ENCODE measurements at regions of chr9 and their contacts with region 1.

Region 1: GRCh38 chr9:22307013-22307711 is 139.5 kb upstream of the DMRTA1 start:
- H3K4me3 ChIP-seq: no peak overlapping the region
- H3K27ac ChIP-seq: no peak overlapping the region
- H3K4me1 ChIP-seq: no peaks in the 10 kb centered on the region
- CTCF ChIP-seq: peak; percentile 42; the same call in 1 of the 2 replicates

Region 2: GRCh38 chr9:22036866-22037626 is 270.1 kb before region 1 on chr9:
- CTCF ChIA-PET with region 1: no interaction called
- POLR2A ChIA-PET with region 1: no interaction called
- H3K4me3 ChIP-seq: no peak overlapping the region
- H3K27ac ChIP-seq: no peak overlapping the region
- H3K4me1 ChIP-seq: peaks cover 9% of the 10 kb centered on the region; the same call in 1 of the 2 replicates
- CTCF ChIP-seq: no peak

Region 3: DNA sequence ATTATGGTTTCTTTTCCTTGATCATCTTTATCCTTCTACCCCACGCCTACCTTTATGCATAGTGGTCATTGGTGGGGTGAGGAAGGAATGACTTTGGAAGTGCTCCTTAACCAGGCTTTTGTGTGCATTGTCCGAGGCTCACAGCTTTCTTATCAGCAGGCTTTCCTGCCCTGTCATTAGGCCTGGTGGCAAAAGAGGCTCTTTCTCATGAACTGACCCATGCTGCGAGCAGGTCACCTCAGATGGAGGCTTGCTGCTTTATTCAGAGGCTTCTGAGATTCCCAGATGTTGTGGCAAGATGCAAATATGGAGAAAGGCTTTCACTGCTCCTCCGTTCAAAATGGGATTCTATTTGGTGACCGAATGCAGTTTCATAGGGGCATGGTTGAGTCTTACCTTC is 82.1 kb after region 1 on chr9:
- CTCF ChIA-PET with region 1: interaction called, 10 read pairs
- POLR2A ChIA-PET with region 1: no interaction called
- H3K4me3 ChIP-seq: no peak overlapping the region
- H3K27ac ChIP-seq: no peak overlapping the region
- H3K4me1 ChIP-seq: no peaks in the 10 kb centered on the region
- CTCF ChIP-seq: no peak